ENCODE measurements at regions of chr10 and their contacts with region 1.

Region 1: DNA sequence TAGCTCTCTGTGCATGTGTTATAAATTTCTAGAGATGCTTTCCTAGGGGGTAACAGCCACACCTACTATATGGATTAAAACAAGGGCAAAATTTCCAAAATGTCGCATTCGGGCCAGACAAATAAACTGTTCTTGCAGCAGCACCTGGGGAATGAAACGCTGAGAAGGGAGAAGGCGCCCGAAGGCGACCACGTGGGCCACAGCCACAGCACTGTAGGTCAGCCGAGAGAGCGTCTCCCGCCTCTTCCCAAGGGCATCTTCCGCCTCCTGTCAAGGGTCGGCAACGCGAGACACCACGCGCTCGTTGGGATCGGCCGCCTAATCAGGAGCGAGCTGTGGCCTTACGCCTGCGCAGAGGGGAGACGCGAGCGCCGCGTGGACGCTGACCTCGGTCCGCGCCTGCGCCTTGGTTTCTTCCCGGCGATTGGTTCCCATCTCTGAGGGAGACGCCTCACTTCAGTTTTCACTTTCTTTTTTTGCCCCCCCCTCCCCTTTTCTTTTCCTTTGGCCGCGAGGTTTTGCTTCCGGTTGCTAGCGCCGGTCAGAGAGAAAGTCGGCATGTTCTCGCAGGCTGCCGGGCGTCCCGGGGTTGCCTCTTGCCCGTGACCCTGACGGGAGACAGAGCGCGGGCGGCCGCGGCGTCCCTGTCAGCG is at the start of gene TASOR2:
- DNase-seq: peak; percentile 99
- H3K4me3 Mint-ChIP-seq: peak within 1 kb of the TSS; percentile 95
- H3K27ac Mint-ChIP-seq: peak within 1 kb of the TSS; percentile 90
- H3K4me1 Mint-ChIP-seq: peaks cover 4% of the 10 kb centered on the region
- H3K27me3 Mint-ChIP-seq: no peaks in the 10 kb centered on the region
- CTCF ChIP-seq: no peak
- total RNA-seq, gene TASOR2: 93.4 and 123 TPM in 2 replicates

Region 2: GRCh38 chr10:5629303-5630111 is 54.9 kb before region 1 on chr10:
- CTCF ChIA-PET with region 1: interaction called, 10 read pairs
- POLR2A ChIA-PET with region 1: interaction called, 16 read pairs
- intact Hi-C with region 1: no loop called
- DNase-seq: peak; percentile 80
- H3K4me3 Mint-ChIP-seq: no peak overlapping the region
- H3K27ac Mint-ChIP-seq: no peak overlapping the region
- H3K4me1 Mint-ChIP-seq: peaks cover 31% of the 10 kb centered on the region
- H3K27me3 Mint-ChIP-seq: no peaks in the 10 kb centered on the region
- CTCF ChIP-seq: peak; percentile 83

Region 3: GRCh38 chr10:5645375-5645774 is 39.1 kb before region 1 on chr10:
- CTCF ChIA-PET with region 1: no interaction called
- POLR2A ChIA-PET with region 1: no interaction called
- intact Hi-C with region 1: no loop called
- DNase-seq: no peak
- H3K4me3 Mint-ChIP-seq: no peak overlapping the region
- H3K27ac Mint-ChIP-seq: no peak overlapping the region
- H3K4me1 Mint-ChIP-seq: no peaks in the 10 kb centered on the region
- H3K27me3 Mint-ChIP-seq: no peaks in the 10 kb centered on the region
- CTCF ChIP-seq: no peak

Region 4: DNA sequence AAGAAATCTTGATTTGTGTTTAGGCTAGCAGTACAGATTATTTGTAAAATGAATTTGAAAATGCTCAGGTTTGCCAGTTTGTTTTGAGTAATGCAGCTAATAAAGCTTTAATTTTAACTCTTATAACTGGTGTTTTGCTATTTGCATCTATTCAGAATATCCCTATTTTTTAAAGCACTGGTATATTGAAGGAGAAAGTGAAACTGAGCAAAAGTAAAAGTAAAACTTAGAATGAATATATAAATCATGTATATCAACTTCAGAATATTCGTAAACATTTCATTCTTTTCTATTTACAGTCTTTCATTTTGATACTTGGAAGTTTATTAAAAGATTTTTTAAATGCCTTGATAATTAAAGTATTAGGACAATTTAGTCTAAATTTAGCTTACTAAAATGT is 26.4 kb after region 1 on chr10:
- CTCF ChIA-PET with region 1: no interaction called
- POLR2A ChIA-PET with region 1: interaction called, 12 read pairs
- intact Hi-C with region 1: no loop called
- DNase-seq: no peak
- H3K4me3 Mint-ChIP-seq: no peak overlapping the region
- H3K27ac Mint-ChIP-seq: peak overlapping the region; percentile 64
- H3K4me1 Mint-ChIP-seq: peaks cover 34% of the 10 kb centered on the region
- H3K27me3 Mint-ChIP-seq: no peaks in the 10 kb centered on the region
- CTCF ChIP-seq: no peak

Region 5: GRCh38 chr10:5813287-5814109 is 129.1 kb after region 1 on chr10 and contains the start of gene GDI2:
- CTCF ChIA-PET with region 1: interaction called, 3 read pairs
- POLR2A ChIA-PET with region 1: interaction called, 6 read pairs
- intact Hi-C with region 1: loop called (anchors 5 kb)
- DNase-seq: peak; percentile 97
- H3K4me3 Mint-ChIP-seq: peak within 1 kb of the TSS; percentile 84
- H3K27ac Mint-ChIP-seq: peak within 1 kb of the TSS; percentile 30
- H3K4me1 Mint-ChIP-seq: peaks cover 29% of the 10 kb centered on the region
- H3K27me3 Mint-ChIP-seq: no peaks in the 10 kb centered on the region
- CTCF ChIP-seq: no peak
- total RNA-seq, gene GDI2: 173 and 200 TPM in 2 replicates

Region 6: GRCh38 chr10:5889624-5890451 is 205.4 kb after region 1 on chr10 and contains the starts of genes ANKRD16 and FBH1:
- CTCF ChIA-PET with region 1: interaction called, 4 read pairs
- POLR2A ChIA-PET with region 1: interaction called, 18 read pairs
- intact Hi-C with region 1: loop called (anchors 5 kb)
- DNase-seq: peak; percentile 98
- H3K4me3 Mint-ChIP-seq: peak within 1 kb of the TSS; percentile 80
- H3K27ac Mint-ChIP-seq: peak within 1 kb of the TSS; percentile 49
- H3K4me1 Mint-ChIP-seq: peaks cover 35% of the 10 kb centered on the region
- H3K27me3 Mint-ChIP-seq: no peaks in the 10 kb centered on the region
- CTCF ChIP-seq: no peak
- total RNA-seq, gene ANKRD16: 9.9 and 10.6 TPM in 2 replicates
- total RNA-seq, gene FBH1: 61.8 and 70.5 TPM in 2 replicates

Region 7: DNA sequence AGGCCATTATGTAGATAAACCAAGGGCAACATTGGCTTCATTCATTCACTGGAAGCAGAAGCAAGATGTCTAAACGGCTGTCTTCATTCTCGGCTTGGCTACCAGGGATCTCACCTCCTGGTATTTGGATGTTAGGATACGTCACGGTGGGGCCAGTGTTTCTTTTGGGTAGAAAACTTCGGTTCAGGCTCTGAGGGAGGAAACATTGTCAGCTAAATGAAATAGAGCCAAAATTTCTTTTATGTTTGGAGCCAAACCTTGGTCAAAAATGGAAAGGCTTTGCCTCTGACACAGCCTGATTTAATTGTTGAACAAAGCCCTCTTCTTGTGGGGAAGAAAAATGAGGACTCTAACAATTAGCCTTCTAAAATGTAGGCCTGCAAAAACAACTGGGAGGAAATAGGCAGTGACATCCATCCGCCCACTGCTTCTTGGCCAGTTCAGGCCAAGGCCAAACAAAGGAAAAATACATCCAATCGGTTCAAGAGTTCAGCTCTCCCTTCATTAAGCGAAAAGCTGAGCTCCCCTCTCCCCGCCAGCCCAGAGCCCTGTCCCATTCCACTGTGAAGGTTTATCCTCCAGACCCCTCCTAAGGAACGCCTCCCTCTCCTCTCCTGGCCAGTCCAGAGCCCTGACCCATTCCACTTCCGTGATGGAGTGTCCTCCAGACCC is 562.7 kb after region 1 on chr10:
- CTCF ChIA-PET with region 1: no interaction called
- POLR2A ChIA-PET with region 1: no interaction called
- intact Hi-C with region 1: no loop called
- DNase-seq: no peak
- H3K4me3 Mint-ChIP-seq: no peak overlapping the region
- H3K27ac Mint-ChIP-seq: no peak overlapping the region
- H3K4me1 Mint-ChIP-seq: no peaks in the 10 kb centered on the region
- H3K27me3 Mint-ChIP-seq: no peaks in the 10 kb centered on the region
- CTCF ChIP-seq: no peak